ENCODE measurements at regions of chr18 and their contacts with region 1.

Region 1: GRCh38 chr18:58195278-58195765 is 151.3 kb downstream of the NEDD4L start:
- DNase-seq: no peak
- ATAC-seq: peak; percentile 36 to 79

Region 2: GRCh38 chr18:57941841-57942489 is 253.4 kb before region 1 on chr18:
- intact Hi-C with region 1: no loop called
- DNase-seq: no peak
- ATAC-seq: no peak

Region 3: DNA sequence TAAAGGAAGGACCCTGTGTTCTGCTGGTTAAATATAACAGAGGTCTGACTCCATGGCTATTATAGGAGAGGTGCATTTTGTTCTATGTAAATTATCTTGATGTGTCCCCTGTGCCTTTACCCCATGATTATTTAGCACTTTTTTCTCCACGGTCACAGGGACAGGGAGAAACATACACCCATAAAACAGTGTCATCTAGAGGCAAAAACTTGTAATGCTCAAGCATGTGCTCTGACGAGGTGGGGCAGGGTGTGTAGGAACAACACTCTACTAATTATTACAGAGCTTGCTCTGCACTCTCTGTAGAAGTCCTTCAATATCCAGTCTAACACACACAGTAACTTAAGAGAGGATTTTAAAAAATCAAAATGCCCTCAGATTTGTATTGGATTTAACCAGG is 36.6 kb after region 1 on chr18:
- intact Hi-C with region 1: no loop called
- DNase-seq: no peak
- ATAC-seq: peak; percentile 60 to 69

Region 4: DNA sequence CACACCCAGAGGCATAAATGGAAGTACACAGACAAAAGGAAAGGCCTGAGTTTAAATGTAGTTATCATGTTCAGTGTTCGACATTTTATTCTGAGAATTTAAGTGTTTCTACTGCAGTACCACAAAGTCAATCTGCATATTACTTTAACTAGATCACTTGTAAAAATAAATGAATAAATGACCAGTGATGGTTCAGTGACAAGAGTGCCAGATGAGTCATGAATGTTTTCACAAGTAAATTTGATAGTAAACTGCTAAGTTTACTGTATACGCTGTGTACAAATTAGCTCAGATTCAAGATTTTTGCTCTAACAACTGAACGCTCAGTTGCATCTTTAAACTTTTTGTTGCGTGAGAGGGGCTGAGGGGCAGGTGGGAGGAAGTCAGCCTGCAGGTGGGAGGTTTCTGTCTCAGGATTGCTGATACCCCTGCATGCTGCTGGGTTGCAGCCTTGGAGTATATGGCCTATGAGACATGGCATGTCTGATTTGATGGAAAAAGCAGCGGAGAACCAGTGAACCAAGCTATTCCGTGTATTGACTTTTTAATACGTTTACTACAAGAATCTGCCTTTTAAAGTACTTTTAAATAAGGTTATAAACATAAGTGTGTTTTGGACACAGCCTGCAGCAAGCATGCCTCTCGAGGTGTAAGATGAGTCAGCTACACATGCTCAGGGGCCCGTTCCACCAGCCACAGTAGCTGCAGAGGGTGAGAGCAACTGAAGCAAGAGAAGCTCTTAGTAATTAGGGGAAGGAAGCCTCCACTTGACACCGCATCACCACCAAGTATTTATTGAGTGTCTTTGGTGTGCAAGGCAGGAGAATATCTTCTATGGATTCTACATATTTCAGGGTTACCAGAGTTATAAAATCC is 93.8 kb after region 1 on chr18:
- intact Hi-C with region 1: no loop called
- DNase-seq: no peak
- ATAC-seq: peak; percentile 43 to 79

Region 5: DNA sequence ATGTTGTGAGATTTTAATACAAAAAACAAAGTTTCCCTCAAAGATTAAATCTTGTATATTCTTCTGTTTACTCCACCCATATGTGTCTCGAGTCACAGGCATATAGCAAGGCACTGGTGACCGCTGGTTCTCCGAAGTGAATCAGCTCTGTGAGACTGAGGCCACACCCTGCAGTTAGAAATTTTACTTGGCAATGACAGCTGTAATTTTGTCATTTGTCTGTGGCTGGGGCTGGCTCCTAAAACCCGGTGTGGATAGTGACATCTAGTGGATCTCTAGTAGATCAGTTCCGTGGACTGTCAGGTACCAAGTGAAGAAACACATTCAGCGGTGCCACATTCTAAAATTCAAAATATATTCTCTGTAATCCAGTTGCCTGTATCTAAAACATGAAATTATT is 126.7 kb after region 1 on chr18:
- intact Hi-C with region 1: loop called (anchors 5 to 10 kb)
- DNase-seq: peak; percentile 71
- ATAC-seq: peak; percentile 94 to 96

Measured in left cardiac atrium (tissue), 4 donors.